IMR-90 (cell line): ENCODE measurements at regions of chr6 and their contacts with region 1.

Region 1: GRCh38 chr6:32752580-32752979 is 10.8 kb downstream of the HLA-DQB2 start:
- DNase-seq: no peak
- ATAC-seq: no peak
- H3K4me3 ChIP-seq: no peak overlapping the region
- H3K27ac ChIP-seq: no peak overlapping the region
- H3K4me1 ChIP-seq: no peaks in the 10 kb centered on the region
- H3K27me3 ChIP-seq: peaks cover 1% of the 10 kb centered on the region
- CTCF ChIP-seq: no peak
- POLR2A ChIP-seq: no peak
- RAD21 ChIP-seq: no peak

Region 2: GRCh38 chr6:32658268-32658897 is 94.2 kb before region 1 on chr6:
- CTCF ChIA-PET with region 1: no interaction called
- POLR2A ChIA-PET with region 1: no interaction called
- dilution Hi-C with region 1: no loop called
- in situ Hi-C with region 1: no loop called
- intact Hi-C with region 1: loop called (anchors 5 kb)
- DNase-seq: no peak
- ATAC-seq: no peak
- H3K4me3 ChIP-seq: no peak overlapping the region
- H3K27ac ChIP-seq: no peak overlapping the region
- H3K4me1 ChIP-seq: no peaks in the 10 kb centered on the region
- H3K27me3 ChIP-seq: no peaks in the 10 kb centered on the region
- CTCF ChIP-seq: no peak
- POLR2A ChIP-seq: no peak
- RAD21 ChIP-seq: no peak